CD4-positive, alpha-beta T cell (primary cell): ENCODE measurements at regions of chr7 and their contacts with region 1.

Region 1: DNA sequence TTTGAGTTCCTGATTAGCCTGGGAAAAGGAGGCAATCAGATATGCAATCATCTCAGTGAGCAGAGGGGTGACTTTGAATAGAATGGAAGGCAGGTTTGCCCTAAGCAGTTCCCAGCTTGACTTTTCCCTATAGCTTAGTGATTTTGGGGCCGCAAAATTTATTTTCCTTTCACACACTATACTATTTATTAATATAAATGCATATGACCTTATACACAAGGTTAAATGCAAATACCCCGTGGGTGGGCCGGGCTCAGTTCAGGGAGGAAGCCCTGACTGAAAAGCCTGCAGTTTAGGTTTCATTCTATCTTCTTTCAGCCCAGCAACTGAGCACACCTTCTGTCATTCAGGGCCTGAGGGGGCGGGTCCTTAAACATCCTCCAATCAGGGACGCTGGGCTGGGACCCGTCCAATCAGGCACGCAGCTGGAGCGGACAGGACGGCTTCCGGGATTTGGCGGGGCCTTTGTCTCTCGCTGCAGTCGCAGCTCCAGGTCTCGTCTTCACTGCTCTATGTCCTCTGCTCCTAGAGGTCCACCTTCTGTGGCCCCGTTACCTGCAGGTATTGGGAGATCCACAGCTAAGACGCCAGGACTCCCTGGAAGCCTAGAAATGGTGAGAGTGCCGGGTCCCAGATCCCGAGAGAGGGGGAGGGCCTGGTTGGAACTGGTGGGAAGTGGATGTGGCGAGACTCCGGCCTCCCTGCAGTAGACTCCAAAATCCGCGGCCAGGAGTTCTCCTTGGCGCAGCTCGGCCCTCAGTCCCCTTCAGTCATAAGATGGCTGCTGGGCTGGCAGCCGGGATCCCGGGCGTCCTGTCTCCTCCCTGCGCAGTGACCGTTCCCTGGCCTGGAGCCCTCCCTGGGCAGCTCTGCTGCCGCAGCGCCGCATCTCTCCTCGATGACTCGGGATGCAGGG is at the start of gene ZNF273:
- DNase-seq: peak; percentile 83 to 95 (median 87)
- ATAC-seq: peak; percentile 99
- H3K4me3 ChIP-seq: peak within 1 kb of the TSS; percentile 81
- H3K4me3 Mint-ChIP-seq: peak within 1 kb of the TSS; percentile 99
- H3K27ac ChIP-seq: peak within 1 kb of the TSS; percentile 26 to 64
- H3K27ac Mint-ChIP-seq: peak within 1 kb of the TSS; percentile 94
- H3K4me1 ChIP-seq: peaks cover 14% of the 10 kb centered on the region
- H3K4me1 Mint-ChIP-seq: peaks cover 51% of the 10 kb centered on the region
- H3K27me3 ChIP-seq: no peaks in the 10 kb centered on the region
- H3K27me3 Mint-ChIP-seq: no peaks in the 10 kb centered on the region
- CTCF ChIP-seq: no peak
- total RNA-seq, gene ZNF273: 6.8 TPM

Region 2: GRCh38 chr7:64307254-64308015 is 595.6 kb before region 1 on chr7:
- CTCF ChIA-PET with region 1: no interaction called
- POLR2A ChIA-PET with region 1: interaction called, 10 read pairs
- intact Hi-C with region 1: loop called in 1 of 2 experiments (anchors 5 kb)
- DNase-seq: peak; percentile 89 to 98 (median 92)
- ATAC-seq: peak; percentile 98
- H3K4me3 ChIP-seq: peak overlapping the region; percentile 59
- H3K4me3 Mint-ChIP-seq: peak overlapping the region; percentile 98
- H3K27ac ChIP-seq: peak overlapping the region; percentile 65 to 83
- H3K27ac Mint-ChIP-seq: peak overlapping the region; percentile 96
- H3K4me1 ChIP-seq: peaks cover 13% of the 10 kb centered on the region
- H3K4me1 Mint-ChIP-seq: peaks cover 22% of the 10 kb centered on the region
- H3K27me3 ChIP-seq: no peaks in the 10 kb centered on the region
- H3K27me3 Mint-ChIP-seq: no peaks in the 10 kb centered on the region
- CTCF ChIP-seq: no peak

Region 3: GRCh38 chr7:64562626-64563275 is 340.3 kb before region 1 on chr7 and contains the start of gene ZNF680:
- CTCF ChIA-PET with region 1: no interaction called
- POLR2A ChIA-PET with region 1: interaction called, 6 read pairs
- intact Hi-C with region 1: loop called (anchors 2 to 10 kb)
- DNase-seq: peak; percentile 79 to 95 (median 84)
- ATAC-seq: peak; percentile 98
- H3K4me3 ChIP-seq: peak within 1 kb of the TSS; percentile 93
- H3K4me3 Mint-ChIP-seq: peak within 1 kb of the TSS; percentile 100
- H3K27ac ChIP-seq: peak within 1 kb of the TSS; percentile 41
- H3K27ac Mint-ChIP-seq: peak within 1 kb of the TSS; percentile 88
- H3K4me1 ChIP-seq: peaks cover 21% of the 10 kb centered on the region
- H3K4me1 Mint-ChIP-seq: peaks cover 41% of the 10 kb centered on the region
- H3K27me3 ChIP-seq: no peaks in the 10 kb centered on the region
- H3K27me3 Mint-ChIP-seq: no peaks in the 10 kb centered on the region
- CTCF ChIP-seq: no peak
- total RNA-seq, gene ZNF680: 8.3 to 8.9 TPM

Region 4: DNA sequence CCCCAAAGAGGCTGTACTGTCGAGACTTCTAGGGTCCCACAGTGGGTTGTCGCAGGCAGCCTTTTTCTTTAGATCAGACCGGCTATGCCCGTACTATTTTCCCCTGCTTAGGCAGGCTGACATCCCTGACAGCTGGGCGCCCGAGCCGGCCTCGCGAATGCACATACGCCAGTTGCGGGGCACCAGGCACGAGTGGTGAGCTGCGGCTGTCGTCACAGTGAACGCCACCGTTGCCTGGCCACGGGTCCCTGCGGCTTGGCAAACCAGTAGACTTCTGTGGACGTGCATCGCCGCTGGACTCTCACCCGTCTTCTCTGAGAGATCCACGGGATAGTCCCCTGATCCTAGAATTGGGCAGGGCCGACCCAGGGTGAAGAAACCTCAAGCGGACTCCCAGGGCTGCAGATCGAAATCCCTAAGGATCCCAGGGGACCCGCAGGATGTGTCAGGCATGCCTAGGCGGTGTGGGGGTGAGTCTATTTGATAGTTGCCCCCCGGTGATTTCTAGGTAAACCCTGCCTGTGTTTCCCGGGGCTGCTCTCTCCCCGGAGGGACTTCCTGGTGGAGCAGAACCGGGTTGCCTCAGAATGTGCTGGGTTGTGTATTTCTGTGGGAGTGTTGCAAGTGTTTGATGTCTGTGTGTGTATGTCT is 33.0 kb before region 1 on chr7:
- CTCF ChIA-PET with region 1: no interaction called
- POLR2A ChIA-PET with region 1: no interaction called
- intact Hi-C with region 1: no loop called
- DNase-seq: no peak
- ATAC-seq: no peak
- H3K4me3 ChIP-seq: no peak overlapping the region
- H3K4me3 Mint-ChIP-seq: no peak overlapping the region
- H3K27ac ChIP-seq: no peak overlapping the region
- H3K27ac Mint-ChIP-seq: no peak overlapping the region
- H3K4me1 ChIP-seq: no peaks in the 10 kb centered on the region
- H3K4me1 Mint-ChIP-seq: no peaks in the 10 kb centered on the region
- H3K27me3 ChIP-seq: no peaks in the 10 kb centered on the region
- H3K27me3 Mint-ChIP-seq: no peaks in the 10 kb centered on the region
- CTCF ChIP-seq: no peak

Region 5: GRCh38 chr7:64887756-64888508 is 15.1 kb before region 1 on chr7:
- CTCF ChIA-PET with region 1: no interaction called
- POLR2A ChIA-PET with region 1: interaction called, 10 read pairs
- intact Hi-C with region 1: no loop called
- DNase-seq: peak in 13 of 14 experiments; percentile 8 to 65 (median 32)
- ATAC-seq: peak; percentile 77
- H3K4me3 ChIP-seq: peak overlapping the region; percentile 52
- H3K4me3 Mint-ChIP-seq: peak overlapping the region; percentile 93
- H3K27ac ChIP-seq: no peak overlapping the region
- H3K27ac Mint-ChIP-seq: no peak overlapping the region
- H3K4me1 ChIP-seq: peaks cover 30% of the 10 kb centered on the region
- H3K4me1 Mint-ChIP-seq: peaks cover 18% of the 10 kb centered on the region
- H3K27me3 ChIP-seq: peaks cover 42 to 55% of the 10 kb centered on the region in 2 experiments
- H3K27me3 Mint-ChIP-seq: peaks cover 82% of the 10 kb centered on the region
- CTCF ChIP-seq: peak; percentile 54

Region 6: GRCh38 chr7:65037740-65038678 is 134.9 kb after region 1 on chr7:
- CTCF ChIA-PET with region 1: no interaction called
- POLR2A ChIA-PET with region 1: interaction called, 4 read pairs
- intact Hi-C with region 1: loop called in 1 of 2 experiments (anchors 5 kb)
- DNase-seq: peak; percentile 88 to 98 (median 93)
- ATAC-seq: peak; percentile 87
- H3K4me3 ChIP-seq: peak overlapping the region; percentile 63
- H3K4me3 Mint-ChIP-seq: peak overlapping the region; percentile 86
- H3K27ac ChIP-seq: peak overlapping the region in 1 of 2 donors; percentile 56
- H3K27ac Mint-ChIP-seq: peak overlapping the region; percentile 57
- H3K4me1 ChIP-seq: peaks cover 5% of the 10 kb centered on the region
- H3K4me1 Mint-ChIP-seq: peaks cover 17% of the 10 kb centered on the region
- H3K27me3 ChIP-seq: no peaks in the 10 kb centered on the region
- H3K27me3 Mint-ChIP-seq: no peaks in the 10 kb centered on the region
- CTCF ChIP-seq: no peak

Region 7: DNA sequence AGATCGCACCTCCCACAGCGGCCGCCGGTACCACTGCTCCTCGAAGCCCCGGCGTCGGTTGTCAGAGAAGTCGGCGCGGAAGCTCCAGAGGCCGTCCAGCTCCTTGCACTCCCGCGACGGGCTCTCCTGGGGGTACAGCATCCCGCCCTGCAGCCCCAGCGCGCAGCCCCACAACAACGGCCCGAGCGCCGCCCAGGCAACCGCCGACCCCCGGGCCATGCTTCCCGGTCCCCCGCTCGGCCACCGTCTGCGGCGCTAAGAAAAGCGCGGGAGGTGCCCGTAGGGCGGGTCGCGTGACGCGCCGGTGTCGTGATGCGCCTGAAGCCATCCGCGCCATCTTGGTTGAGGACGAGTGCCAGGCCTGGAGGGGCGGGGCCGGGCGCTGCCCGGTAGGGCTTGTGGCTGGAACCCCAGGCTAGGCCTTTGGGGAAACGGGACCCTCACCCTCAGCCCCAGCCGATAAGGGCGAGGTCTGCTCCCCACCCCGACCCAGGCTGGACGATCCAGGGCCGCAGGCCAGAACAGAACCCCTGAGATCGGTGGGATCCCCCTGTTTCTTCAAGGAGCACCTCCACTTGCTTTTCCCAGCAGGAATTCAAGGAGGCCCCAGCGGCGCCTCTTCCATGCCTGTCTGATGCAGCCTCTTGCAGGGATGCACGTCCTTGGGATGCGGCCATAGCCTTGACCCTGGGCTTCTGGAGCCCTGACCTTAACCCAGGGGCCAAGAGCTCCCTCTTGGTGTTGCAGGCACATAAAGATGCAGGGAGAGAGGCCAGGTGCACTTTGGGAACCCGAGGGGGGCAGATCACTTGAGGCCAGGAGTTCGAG is 1079.1 kb after region 1 on chr7 and contains the start of gene GUSB:
- CTCF ChIA-PET with region 1: no interaction called
- POLR2A ChIA-PET with region 1: no interaction called
- intact Hi-C with region 1: loop called in 1 of 2 experiments (anchors 10 kb)
- DNase-seq: peak; percentile 80 to 92 (median 88)
- ATAC-seq: peak; percentile 83
- H3K4me3 ChIP-seq: peak within 1 kb of the TSS; percentile 83
- H3K4me3 Mint-ChIP-seq: peak within 1 kb of the TSS; percentile 92
- H3K27ac ChIP-seq: peak within 1 kb of the TSS in 1 of 2 donors; percentile 68
- H3K27ac Mint-ChIP-seq: peak within 1 kb of the TSS; percentile 84
- H3K4me1 ChIP-seq: peaks cover 31% of the 10 kb centered on the region
- H3K4me1 Mint-ChIP-seq: peaks cover 9% of the 10 kb centered on the region
- H3K27me3 ChIP-seq: no peaks in the 10 kb centered on the region
- H3K27me3 Mint-ChIP-seq: no peaks in the 10 kb centered on the region
- CTCF ChIP-seq: no peak
- total RNA-seq, gene GUSB: 42.9 to 49.7 TPM